ENCODE measurements at regions of chr6 and their contacts with region 1.

Region 1: DNA sequence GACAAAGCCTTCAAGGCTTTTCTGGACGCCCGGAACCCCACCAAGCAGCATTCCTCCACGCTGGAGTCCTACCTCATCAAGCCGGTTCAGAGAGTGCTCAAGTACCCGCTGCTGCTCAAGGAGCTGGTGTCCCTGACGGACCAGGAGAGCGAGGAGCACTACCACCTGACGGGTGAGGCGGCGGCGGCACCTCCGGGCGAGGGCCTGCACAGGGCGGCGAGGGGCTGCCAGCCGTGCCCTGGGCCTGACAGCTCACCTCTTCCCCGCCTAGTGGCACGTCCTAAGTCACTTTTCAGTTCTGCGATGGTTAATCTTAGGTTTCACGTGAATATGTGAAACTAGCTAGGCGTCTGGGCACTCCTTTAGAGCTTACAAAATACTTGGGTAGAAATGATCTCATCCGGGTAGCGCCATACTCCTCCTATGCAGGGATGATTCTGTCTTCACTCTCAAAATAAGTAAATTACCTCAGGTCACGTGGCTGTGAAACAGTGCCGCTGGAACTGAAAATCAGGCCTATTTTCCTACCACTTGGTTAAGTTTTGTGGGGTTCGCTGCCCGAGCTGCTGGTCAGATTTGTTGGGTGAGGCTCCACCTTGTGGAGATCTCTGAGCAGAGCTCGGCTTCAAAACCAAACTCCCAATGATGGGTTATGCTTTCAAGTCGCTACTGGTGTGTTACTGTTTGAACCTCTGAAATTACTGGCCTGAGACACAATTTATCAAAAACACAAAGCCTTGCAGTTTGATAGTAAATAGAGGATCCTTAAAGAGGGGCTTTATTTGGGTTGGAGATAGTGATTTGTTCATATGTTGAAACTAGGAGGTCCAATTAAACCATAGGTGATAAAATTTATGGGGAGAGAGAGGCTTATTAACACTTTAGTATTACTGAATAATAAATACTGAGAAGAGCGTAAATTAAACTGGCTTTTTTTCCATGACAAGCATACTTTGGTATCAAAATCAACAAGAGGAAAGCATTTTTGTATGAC is 15.5 kb upstream of the CLDN20 start:
- DNase-seq: peak; percentile 56
- H3K4me3 ChIP-seq: no peak overlapping the region
- H3K27ac ChIP-seq: no peak overlapping the region
- H3K4me1 ChIP-seq: no peaks in the 10 kb centered on the region
- H3K27me3 ChIP-seq: no peaks in the 10 kb centered on the region
- CTCF ChIP-seq: peak in 2 of 3 experiments; percentile 40 to 41
- POLR2A ChIP-seq: no peak

Region 2: GRCh38 chr6:154814063-154814462 is 434.2 kb before region 1 on chr6:
- intact Hi-C with region 1: no loop called
- DNase-seq: no peak
- H3K4me3 ChIP-seq: no peak overlapping the region
- H3K27ac ChIP-seq: no peak overlapping the region
- H3K4me1 ChIP-seq: no peaks in the 10 kb centered on the region
- H3K27me3 ChIP-seq: no peaks in the 10 kb centered on the region
- CTCF ChIP-seq: no peak
- POLR2A ChIP-seq: no peak

Region 3: GRCh38 chr6:155188707-155189496 is 59.4 kb before region 1 on chr6:
- intact Hi-C with region 1: loop called (anchors 10 kb)
- DNase-seq: no peak
- H3K4me3 ChIP-seq: no peak overlapping the region
- H3K27ac ChIP-seq: no peak overlapping the region
- H3K4me1 ChIP-seq: no peaks in the 10 kb centered on the region
- H3K27me3 ChIP-seq: no peaks in the 10 kb centered on the region
- CTCF ChIP-seq: no peak
- POLR2A ChIP-seq: no peak

Region 4: DNA sequence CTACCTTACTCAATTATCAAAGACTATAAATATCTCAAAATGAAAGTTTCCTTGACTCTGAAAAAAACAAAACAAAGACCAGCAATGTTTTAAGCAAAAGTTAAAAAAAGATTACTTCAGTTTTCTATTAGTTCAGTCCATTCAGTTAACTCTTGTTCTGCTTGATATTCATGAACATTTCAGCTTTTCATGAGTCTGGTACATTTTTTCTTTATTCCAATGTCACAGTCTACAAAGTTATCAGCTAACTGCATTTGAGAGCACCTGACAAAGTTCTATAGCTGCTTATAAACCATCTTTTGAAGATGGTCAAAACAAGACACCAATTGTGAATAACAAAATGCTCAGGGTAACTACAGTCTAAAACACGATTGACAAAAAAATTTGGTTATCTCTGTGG is 363.4 kb after region 1 on chr6:
- intact Hi-C with region 1: no loop called
- DNase-seq: no peak
- H3K4me3 ChIP-seq: no peak overlapping the region
- H3K27ac ChIP-seq: no peak overlapping the region
- H3K4me1 ChIP-seq: no peaks in the 10 kb centered on the region
- H3K27me3 ChIP-seq: no peaks in the 10 kb centered on the region
- CTCF ChIP-seq: no peak
- POLR2A ChIP-seq: no peak